ENCODE measurements at regions of chr13 and their contacts with region 1.

Region 1: GRCh38 chr13:50788551-50789210 is 54.8 kb downstream of the DLEU7 start:
- DNase-seq: no peak
- H3K4me3 ChIP-seq: no peak overlapping the region
- H3K27ac ChIP-seq: no peak overlapping the region
- H3K4me1 ChIP-seq: peaks cover 0 to 6% (median 0%) of the 10 kb centered on the region in 3 donors
- H3K27me3 ChIP-seq: no peaks in the 10 kb centered on the region
- CTCF ChIP-seq: no peak
- POLR2A ChIP-seq: no peak

Region 2: DNA sequence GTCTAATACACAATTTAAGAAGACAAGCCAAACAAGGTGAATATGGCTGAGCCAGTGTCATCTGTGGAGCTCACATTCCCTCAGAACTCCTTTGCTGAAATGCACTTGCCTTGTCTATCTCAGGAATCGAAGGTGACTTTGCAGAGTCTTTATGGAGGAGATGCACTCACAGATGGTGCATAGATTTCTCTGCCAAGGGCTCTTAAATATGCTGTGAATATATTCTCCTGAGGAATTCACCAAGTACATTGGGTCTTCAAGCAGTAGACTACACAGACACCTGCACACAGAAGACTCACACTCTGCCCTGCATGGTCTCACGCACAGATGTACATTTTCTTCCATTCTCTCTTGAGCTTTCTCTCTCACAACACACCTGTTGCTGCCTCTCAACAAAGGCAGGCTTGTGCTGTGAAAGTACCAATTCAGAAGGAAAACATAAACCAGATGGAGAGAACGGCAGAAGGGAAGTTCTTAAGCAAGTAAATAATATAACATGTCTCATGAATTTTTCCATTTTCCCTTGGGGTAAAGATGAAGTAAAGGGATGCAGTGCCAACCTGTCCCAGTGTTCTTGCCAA is 119.9 kb before region 1 on chr13:
- intact Hi-C with region 1: loop called (anchors 10 kb)
- DNase-seq: no peak
- H3K4me3 ChIP-seq: no peak overlapping the region
- H3K27ac ChIP-seq: no peak overlapping the region
- H3K4me1 ChIP-seq: peaks cover 0 to 17% (median 0%) of the 10 kb centered on the region in 3 donors
- H3K27me3 ChIP-seq: no peaks in the 10 kb centered on the region
- CTCF ChIP-seq: no peak
- POLR2A ChIP-seq: no peak

Region 3: GRCh38 chr13:50936679-50937078 is 148.0 kb after region 1 on chr13:
- intact Hi-C with region 1: no loop called
- DNase-seq: no peak
- H3K4me3 ChIP-seq: no peak overlapping the region
- H3K27ac ChIP-seq: no peak overlapping the region
- H3K4me1 ChIP-seq: no peaks in the 10 kb centered on the region
- H3K27me3 ChIP-seq: no peaks in the 10 kb centered on the region
- CTCF ChIP-seq: no peak
- POLR2A ChIP-seq: no peak